B cell (primary cell): ENCODE measurements at regions of chr4 and their contacts with region 1.

Region 1: DNA sequence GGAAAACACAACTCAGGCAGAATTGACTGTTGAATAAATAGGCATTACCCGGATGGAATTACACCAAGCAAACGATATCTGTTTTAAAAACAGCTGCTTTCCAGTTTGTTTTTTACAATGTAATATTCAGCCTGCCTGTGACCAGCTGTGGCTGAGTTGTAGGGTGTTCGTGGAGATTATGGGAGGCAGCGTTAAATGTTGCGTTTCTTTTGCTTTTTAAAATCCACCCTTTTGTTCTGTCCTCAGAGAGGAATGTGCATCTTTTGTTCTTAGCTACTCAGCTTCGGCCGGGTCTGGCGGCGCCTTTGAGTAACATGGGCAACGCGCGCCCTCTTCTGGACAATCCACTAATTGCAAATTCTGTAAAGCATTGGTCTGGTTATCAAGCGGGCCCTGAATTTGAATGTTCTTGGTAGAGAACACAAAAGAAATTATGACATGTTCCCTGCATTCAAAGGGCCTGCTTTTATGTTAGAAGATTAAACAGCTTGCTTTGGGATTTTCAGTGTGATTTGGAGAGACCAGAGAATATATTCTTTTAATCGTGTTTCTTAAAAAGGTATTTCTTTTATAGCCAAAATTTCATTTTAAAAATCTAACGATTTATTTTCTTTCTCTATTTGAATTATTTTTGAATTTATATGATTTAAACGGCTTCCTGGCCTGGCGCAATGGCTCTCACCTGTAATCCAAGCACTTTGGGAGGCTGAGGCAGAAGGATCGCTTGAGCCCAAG is 76.3 kb upstream of the TRIM2 start:
- DNase-seq: peak; percentile 89
- ATAC-seq: peak; percentile 90
- H3K4me3 ChIP-seq: no peak overlapping the region
- H3K4me3 Mint-ChIP-seq: no peak overlapping the region
- H3K27ac ChIP-seq: no peak overlapping the region
- H3K27ac Mint-ChIP-seq: no peak overlapping the region
- H3K4me1 ChIP-seq: peaks cover 0 to 4% of the 10 kb centered on the region in 2 donors
- H3K4me1 Mint-ChIP-seq: peaks cover 6% of the 10 kb centered on the region
- H3K27me3 ChIP-seq: no peaks in the 10 kb centered on the region
- H3K27me3 Mint-ChIP-seq: no peaks in the 10 kb centered on the region
- CTCF ChIP-seq: peak; percentile 91

Region 2: DNA sequence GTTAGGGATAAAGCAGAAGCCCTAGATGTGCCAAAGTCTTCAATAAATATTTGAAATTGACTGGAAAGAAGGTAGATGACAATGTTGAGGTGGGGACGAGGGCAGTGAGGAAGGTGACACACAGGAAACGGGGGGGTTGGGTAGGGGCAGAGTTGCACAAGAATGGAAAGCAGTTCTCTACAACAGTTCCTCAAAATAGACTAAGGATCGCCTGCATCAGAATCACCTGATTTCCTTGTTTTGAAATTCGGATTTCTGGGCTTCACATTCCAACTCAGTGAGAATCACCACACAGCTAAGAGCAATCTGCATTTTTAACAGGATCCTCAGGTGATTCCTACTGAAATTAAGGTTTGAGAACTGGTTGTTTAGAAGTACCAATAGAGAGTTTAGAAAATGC is 277.6 kb before region 1 on chr4:
- CTCF ChIA-PET with region 1: interaction called, 154 read pairs
- POLR2A ChIA-PET with region 1: no interaction called
- intact Hi-C with region 1: loop called (anchors 1 kb)
- DNase-seq: peak; percentile 77
- ATAC-seq: peak; percentile 84
- H3K4me3 ChIP-seq: peak overlapping the region in 4 of 5 experiments; percentile 7 to 45 (median 19)
- H3K4me3 Mint-ChIP-seq: peak overlapping the region; percentile 63
- H3K27ac ChIP-seq: peak overlapping the region; percentile 46 to 86
- H3K27ac Mint-ChIP-seq: peak overlapping the region; percentile 39
- H3K4me1 ChIP-seq: peaks cover 21 to 23% of the 10 kb centered on the region in 2 donors
- H3K4me1 Mint-ChIP-seq: peaks cover 26% of the 10 kb centered on the region
- H3K27me3 ChIP-seq: no peaks in the 10 kb centered on the region
- H3K27me3 Mint-ChIP-seq: no peaks in the 10 kb centered on the region
- CTCF ChIP-seq: no peak

Region 3: DNA sequence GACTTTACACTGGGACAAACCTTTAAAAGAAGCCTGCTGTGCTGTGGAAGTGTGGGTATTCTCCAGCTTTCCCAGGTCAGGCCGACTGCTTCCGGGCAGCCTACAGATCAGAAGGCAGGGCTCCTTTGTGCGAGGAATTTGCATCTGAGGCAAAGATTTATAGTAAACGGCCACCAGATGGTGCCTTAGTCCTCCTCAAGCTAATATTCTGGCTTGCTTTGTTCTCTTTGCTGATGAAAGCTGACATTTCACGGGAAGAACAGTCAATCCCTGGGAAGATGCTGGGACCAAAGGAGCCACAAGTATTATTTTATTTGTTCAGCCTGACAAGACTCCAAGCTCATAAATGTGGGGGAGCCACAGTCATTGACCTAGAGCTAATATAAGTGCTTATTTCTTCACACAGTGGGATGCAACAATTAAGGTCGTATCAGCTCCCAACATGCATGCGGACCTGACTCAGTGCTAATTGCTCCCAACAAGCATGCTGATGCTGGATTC is 44.4 kb before region 1 on chr4:
- CTCF ChIA-PET with region 1: interaction called, 356 read pairs
- POLR2A ChIA-PET with region 1: no interaction called
- intact Hi-C with region 1: loop called (anchors 1 kb)
- DNase-seq: peak; percentile 79
- ATAC-seq: peak; percentile 55
- H3K4me3 ChIP-seq: no peak overlapping the region
- H3K4me3 Mint-ChIP-seq: peak overlapping the region; percentile 72
- H3K27ac ChIP-seq: no peak overlapping the region
- H3K27ac Mint-ChIP-seq: peak overlapping the region; percentile 47
- H3K4me1 ChIP-seq: peaks cover 25 to 32% of the 10 kb centered on the region in 2 donors
- H3K4me1 Mint-ChIP-seq: peaks cover 26% of the 10 kb centered on the region
- H3K27me3 ChIP-seq: no peaks in the 10 kb centered on the region
- H3K27me3 Mint-ChIP-seq: peaks cover 3% of the 10 kb centered on the region
- CTCF ChIP-seq: peak; percentile 76

Region 4: GRCh38 chr4:153095448-153096204 is 32.3 kb before region 1 on chr4:
- CTCF ChIA-PET with region 1: interaction called, 42 read pairs
- POLR2A ChIA-PET with region 1: no interaction called
- intact Hi-C with region 1: no loop called
- DNase-seq: no peak
- ATAC-seq: no peak
- H3K4me3 ChIP-seq: no peak overlapping the region
- H3K4me3 Mint-ChIP-seq: no peak overlapping the region
- H3K27ac ChIP-seq: no peak overlapping the region
- H3K27ac Mint-ChIP-seq: no peak overlapping the region
- H3K4me1 ChIP-seq: no peaks in the 10 kb centered on the region
- H3K4me1 Mint-ChIP-seq: no peaks in the 10 kb centered on the region
- H3K27me3 ChIP-seq: no peaks in the 10 kb centered on the region
- H3K27me3 Mint-ChIP-seq: no peaks in the 10 kb centered on the region
- CTCF ChIP-seq: no peak

Region 5: DNA sequence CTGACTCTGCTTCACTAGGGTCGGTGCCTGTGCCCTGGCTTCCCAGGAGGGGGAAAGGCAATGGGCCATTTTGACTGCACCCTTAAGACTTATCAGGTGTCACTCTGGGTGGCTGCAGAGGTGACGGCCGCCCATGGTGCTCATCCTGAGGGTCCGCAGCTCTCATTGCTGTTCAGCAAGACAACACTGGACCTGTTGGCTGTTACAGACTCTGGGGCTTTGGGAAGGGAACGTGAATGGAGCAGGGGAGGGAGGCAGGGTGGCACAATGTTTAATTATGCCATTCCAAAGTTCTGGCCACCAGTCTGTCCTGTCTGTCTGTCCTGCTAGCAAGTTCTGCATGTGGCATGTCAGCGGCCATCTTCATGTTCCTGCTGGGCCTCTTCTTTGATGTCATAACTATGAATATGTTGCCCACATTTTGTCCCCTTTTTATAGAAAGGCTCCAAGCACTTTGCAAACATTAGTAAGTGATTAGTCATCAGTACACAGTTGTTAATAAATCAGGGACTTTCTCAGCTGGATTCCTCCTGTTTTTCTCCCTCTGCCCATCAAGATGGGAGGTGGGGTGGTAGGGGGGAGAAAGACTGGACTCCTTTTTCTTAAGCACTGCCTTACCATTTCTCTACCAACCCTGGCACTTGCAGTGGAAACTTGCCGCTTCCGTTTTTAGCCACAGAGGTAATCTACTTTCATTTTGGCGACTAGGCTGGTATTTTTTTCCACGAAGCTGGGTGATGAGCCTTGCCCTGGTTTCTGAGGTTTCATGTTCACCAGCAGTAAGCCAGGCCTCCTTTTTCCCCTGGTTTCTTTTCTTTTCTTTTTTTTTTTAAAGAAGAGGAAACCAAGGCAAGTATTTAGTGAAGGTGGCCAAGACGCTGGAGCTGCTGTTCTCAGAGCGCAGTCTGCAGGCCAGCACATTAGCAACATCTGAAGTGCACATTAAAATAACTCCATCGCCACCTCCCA is 12.3 kb before region 1 on chr4:
- CTCF ChIA-PET with region 1: interaction called, 89 read pairs
- POLR2A ChIA-PET with region 1: no interaction called
- intact Hi-C with region 1: loop called (anchors 2 kb)
- DNase-seq: peak; percentile 79
- ATAC-seq: peak; percentile 85
- H3K4me3 ChIP-seq: peak overlapping the region in 3 of 5 experiments; percentile 32 to 41 (median 35)
- H3K4me3 Mint-ChIP-seq: peak overlapping the region; percentile 72
- H3K27ac ChIP-seq: peak overlapping the region; percentile 58 to 79
- H3K27ac Mint-ChIP-seq: peak overlapping the region; percentile 95
- H3K4me1 ChIP-seq: peaks cover 38 to 56% of the 10 kb centered on the region in 2 donors
- H3K4me1 Mint-ChIP-seq: peaks cover 21% of the 10 kb centered on the region
- H3K27me3 ChIP-seq: no peaks in the 10 kb centered on the region
- H3K27me3 Mint-ChIP-seq: no peaks in the 10 kb centered on the region
- CTCF ChIP-seq: no peak

Region 6: GRCh38 chr4:153643406-153644383 is 515.8 kb after region 1 on chr4:
- CTCF ChIA-PET with region 1: interaction called, 22 read pairs
- POLR2A ChIA-PET with region 1: no interaction called
- intact Hi-C with region 1: loop called (anchors 5 kb)
- DNase-seq: peak; percentile 80
- ATAC-seq: peak; percentile 96
- H3K4me3 ChIP-seq: no peak overlapping the region
- H3K4me3 Mint-ChIP-seq: no peak overlapping the region
- H3K27ac ChIP-seq: no peak overlapping the region
- H3K27ac Mint-ChIP-seq: no peak overlapping the region
- H3K4me1 ChIP-seq: no peaks in the 10 kb centered on the region
- H3K4me1 Mint-ChIP-seq: peaks cover 8% of the 10 kb centered on the region
- H3K27me3 ChIP-seq: no peaks in the 10 kb centered on the region
- H3K27me3 Mint-ChIP-seq: no peaks in the 10 kb centered on the region
- CTCF ChIP-seq: peak; percentile 81